HepG2 (cell line): ENCODE measurements at regions of chrX and their contacts with region 1.

Region 1: GRCh38 chrX:18674788-18675735 is 3.2 kb upstream of the RS1 start:
- DNase-seq: peak; percentile 58
- ATAC-seq: peak; percentile 60
- H3K4me3 ChIP-seq: peak overlapping the region; percentile 72 to 78 (median 75)
- H3K27ac ChIP-seq: peak overlapping the region; percentile 57
- H3K4me1 ChIP-seq: peaks cover 13% of the 10 kb centered on the region
- H3K27me3 ChIP-seq: no peaks in the 10 kb centered on the region
- CTCF ChIP-seq: no peak
- EP300 ChIP-seq: no peak
- POLR2A ChIP-seq: 0 out of 4 replicates have a peak, but pooled peaks of 1 of the 2 experiments have one; percentile 0
- RAD21 ChIP-seq: 0 out of 2 replicates have a peak, but pooled peaks have one; percentile 17

Region 2: GRCh38 chrX:18425199-18426003 is 249.7 kb before region 1 on chrX and contains the start of gene CDKL5:
- CTCF ChIA-PET with region 1: no interaction called
- POLR2A ChIA-PET with region 1: no interaction called
- in situ Hi-C with region 1: loop called (anchors 10 kb)
- intact Hi-C with region 1: no loop called
- DNase-seq: peak; percentile 92
- ATAC-seq: peak; percentile 91
- H3K4me3 ChIP-seq: peak within 1 kb of the TSS; percentile 74 to 80 (median 78)
- H3K27ac ChIP-seq: peak within 1 kb of the TSS; percentile 68
- H3K4me1 ChIP-seq: peaks cover 18% of the 10 kb centered on the region; the same call in 1 of the 2 replicates
- H3K27me3 ChIP-seq: no peaks in the 10 kb centered on the region; a peak in 1 of 5 replicates
- CTCF ChIP-seq: no peak
- EP300 ChIP-seq: no peak
- POLR2A ChIP-seq: peak; percentile 47 to 70; a peak in 3 of 4 replicates
- RAD21 ChIP-seq: no peak
- total RNA-seq, gene CDKL5: 7.0 and 9.2 TPM in 2 replicates

Region 3: DNA sequence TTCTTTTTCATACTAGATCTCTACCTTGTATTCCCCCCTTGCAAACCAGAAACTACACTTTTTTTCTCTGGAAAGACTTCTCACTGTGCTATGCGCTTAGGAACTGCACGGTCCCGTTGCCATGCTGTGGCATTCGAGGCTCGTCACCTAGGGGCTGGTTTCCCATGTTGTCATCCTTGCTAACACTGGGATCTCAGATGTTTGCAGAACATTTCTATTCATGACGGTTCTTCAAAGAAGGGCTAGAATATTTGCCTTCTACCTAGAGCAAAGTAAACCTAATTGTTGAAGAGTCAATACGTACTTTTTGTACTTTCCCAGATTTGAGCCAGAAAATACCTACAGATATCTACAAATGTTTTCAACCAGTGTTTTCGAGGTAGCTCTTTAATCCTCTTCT is 44.1 kb before region 1 on chrX:
- CTCF ChIA-PET with region 1: no interaction called
- POLR2A ChIA-PET with region 1: interaction called, 4 read pairs
- in situ Hi-C with region 1: no loop called
- intact Hi-C with region 1: loop called (anchors 5 kb)
- DNase-seq: peak; percentile 89
- ATAC-seq: peak; percentile 92
- H3K4me3 ChIP-seq: no peak overlapping the region
- H3K27ac ChIP-seq: peak overlapping the region; percentile 51
- H3K4me1 ChIP-seq: peaks cover 35% of the 10 kb centered on the region
- H3K27me3 ChIP-seq: no peaks in the 10 kb centered on the region
- CTCF ChIP-seq: no peak
- EP300 ChIP-seq: no peak; a peak in 1 of 4 replicates
- POLR2A ChIP-seq: no peak
- RAD21 ChIP-seq: no peak

Region 4: DNA sequence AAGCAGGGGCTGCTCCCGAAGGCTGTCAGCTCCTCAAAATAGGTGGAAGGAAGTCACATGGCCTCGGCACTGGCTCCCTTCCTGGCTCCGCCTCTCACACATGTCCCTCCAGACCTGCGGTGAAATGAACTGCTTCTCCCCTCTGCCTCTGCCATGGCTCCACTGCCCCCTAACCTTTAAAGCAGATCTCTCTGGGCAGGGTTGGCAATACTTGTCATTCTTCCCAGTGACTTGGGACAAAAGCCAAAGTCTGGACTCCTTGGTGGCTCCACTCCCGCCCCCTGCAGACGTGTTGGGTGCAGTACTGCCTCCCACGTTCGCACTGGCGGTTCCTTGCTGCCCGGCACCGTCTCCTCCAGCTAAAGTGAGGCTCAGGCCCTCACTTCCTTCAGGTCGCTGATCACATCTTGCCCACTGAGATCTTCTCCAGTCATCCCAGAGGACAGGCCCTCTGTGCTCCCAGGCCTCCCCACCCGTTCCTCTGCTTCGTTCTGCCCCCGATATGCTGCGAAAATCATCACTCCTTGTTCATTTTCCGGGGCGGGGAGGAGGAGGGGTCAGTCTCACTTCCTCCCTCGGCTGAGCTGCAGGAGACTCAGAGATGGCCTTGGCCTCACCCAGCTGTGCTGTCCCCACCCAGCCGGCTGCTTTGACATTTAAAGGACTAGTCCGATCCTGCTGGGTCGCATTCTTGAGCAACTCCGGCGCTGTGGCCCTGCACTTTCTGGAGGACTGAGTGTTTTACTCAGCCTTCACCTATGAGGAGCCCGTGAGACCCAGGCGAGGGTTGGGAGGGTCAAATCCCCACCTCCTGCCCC is 211.5 kb after region 1 on chrX:
- CTCF ChIA-PET with region 1: no interaction called
- POLR2A ChIA-PET with region 1: no interaction called
- in situ Hi-C with region 1: no loop called
- intact Hi-C with region 1: loop called (anchors 5 kb)
- DNase-seq: peak; percentile 22
- ATAC-seq: peak; percentile 52
- H3K4me3 ChIP-seq: peak overlapping the region in 2 of 3 experiments; percentile 39 to 59; a peak in 4 of 6 replicates
- H3K27ac ChIP-seq: no peak overlapping the region
- H3K4me1 ChIP-seq: peaks cover 39% of the 10 kb centered on the region
- H3K27me3 ChIP-seq: no peaks in the 10 kb centered on the region
- CTCF ChIP-seq: peak; percentile 62
- EP300 ChIP-seq: no peak
- POLR2A ChIP-seq: peak in 1 of 2 experiments; percentile 21; a peak in 1 of 4 replicates
- RAD21 ChIP-seq: 0 out of 2 replicates have a peak, but pooled peaks have one; percentile 8